GM18951 (cell line): ENCODE measurements at regions of chr17 and their contacts with region 1.

Region 1: DNA sequence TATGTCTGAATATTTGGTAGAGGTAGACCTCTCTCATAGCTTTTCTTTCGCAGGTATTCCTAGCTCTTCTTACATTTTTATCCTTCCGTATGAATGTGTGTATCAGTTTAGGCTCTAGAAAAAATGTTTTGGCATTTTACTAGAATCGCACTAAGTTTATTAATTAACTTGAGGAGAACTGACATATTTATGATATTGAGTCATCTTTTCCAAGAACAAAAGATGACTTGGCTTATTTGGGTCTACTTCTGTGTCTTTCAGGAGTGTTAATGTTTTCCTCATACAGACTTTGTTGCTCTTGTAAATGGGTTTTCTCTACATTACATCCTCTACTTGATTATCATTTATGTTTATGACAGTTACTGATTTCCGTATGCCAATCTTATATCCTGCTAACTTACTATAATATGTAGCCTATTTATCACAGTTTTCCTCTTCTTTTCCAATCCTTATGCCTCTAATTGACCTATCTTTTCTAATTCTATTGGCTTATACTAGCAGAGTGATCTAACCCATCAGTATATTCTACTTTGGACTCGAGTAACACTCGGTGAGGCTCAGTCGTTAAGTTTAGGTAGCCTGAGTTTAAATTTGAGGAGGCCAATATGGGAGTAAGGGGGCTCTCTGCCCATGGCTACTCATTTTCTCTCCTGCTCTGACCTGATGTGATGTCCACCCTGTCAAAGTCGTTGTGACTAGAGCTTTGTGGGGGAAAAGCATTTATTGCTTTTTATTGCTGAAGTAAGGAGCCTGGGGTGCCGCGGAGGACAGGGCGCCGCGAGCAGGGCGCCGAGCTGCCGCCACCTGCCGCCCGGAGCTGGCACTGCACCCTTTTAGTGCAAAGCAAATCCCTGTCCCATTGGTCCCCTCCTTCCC is 20.0 kb downstream of the ST6GALNAC1 start:
- POLR2A ChIP-seq: no peak

Region 2: GRCh38 chr17:76523084-76524037 is 100.1 kb before region 1 on chr17:
- in situ Hi-C with region 1: loop called (anchors 5 kb)
- POLR2A ChIP-seq: no peak

Region 3: DNA sequence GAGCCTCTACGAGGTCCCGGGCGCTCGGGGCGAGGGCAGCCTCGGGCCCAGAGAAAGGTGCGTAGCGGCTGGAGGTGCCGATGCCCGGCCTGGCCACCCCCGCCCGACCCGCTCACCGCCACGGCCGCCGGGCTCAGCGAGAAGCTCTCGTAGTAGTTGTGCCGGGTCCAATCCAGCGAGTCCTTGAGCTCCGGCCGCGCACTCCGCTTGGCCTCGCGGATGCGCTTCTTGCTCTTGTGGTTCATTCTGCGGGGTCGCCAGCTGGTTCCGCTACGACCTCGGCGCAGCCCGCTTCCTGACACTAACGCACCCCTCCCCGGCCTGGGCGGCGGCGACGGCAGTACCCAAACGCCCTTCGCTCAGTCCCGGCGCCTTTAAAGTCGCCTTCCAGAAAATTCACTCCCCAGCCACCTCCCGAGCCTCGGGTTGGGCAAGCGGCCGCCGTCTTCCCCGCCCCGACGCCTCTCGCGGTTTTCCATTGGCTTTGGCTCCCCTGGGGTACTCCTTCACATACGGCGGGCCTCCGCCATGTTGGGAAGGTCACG is 102.8 kb after region 1 on chr17 and contains the start of gene JMJD6:
- in situ Hi-C with region 1: no loop called
- POLR2A ChIP-seq: peak; percentile 69